Heart right ventricle (tissue), 16 donors: ENCODE measurements at regions of chr11 and their contacts with region 1.

Region 1: DNA sequence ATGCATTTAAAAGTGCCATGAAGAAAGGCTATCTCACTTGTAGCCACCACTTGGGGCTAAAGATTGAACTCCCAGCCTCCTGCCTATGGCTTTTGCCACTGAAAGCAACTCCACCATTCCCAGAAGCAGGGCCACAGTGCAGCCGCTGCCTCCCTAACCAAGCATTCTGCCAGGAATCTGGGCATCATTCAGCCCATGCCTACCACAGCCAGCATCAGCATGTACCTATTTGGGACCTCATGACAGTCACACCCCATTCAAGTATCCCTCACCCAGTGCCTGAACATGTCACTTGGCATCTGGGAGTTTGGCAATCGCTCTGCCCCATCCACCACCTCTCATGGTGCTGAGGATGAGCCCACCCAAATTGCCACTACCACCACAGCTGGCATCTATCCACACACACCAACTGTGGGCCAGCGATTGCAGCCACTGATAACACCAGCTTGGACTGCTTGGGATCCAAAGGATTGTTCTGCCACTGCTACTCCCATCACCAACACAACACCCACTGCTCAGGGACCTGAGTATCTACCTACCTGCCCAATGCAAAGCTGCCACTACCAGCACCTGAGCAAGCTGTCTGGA is 234.4 kb downstream of the GRM5 start:
- DNase-seq: no peak
- ATAC-seq: no peak
- H3K4me3 ChIP-seq: no peak overlapping the region
- H3K27ac ChIP-seq: no peak overlapping the region
- H3K4me1 ChIP-seq: no peaks in the 10 kb centered on the region
- H3K27me3 ChIP-seq: no peaks in the 10 kb centered on the region
- CTCF ChIP-seq: no peak

Region 2: GRCh38 chr11:88709567-88709966 is 121.8 kb before region 1 on chr11:
- intact Hi-C with region 1: no loop called
- DNase-seq: no peak
- ATAC-seq: no peak
- H3K4me3 ChIP-seq: no peak overlapping the region
- H3K27ac ChIP-seq: no peak overlapping the region
- H3K4me1 ChIP-seq: no peaks in the 10 kb centered on the region
- H3K27me3 ChIP-seq: no peaks in the 10 kb centered on the region
- CTCF ChIP-seq: no peak

Region 3: DNA sequence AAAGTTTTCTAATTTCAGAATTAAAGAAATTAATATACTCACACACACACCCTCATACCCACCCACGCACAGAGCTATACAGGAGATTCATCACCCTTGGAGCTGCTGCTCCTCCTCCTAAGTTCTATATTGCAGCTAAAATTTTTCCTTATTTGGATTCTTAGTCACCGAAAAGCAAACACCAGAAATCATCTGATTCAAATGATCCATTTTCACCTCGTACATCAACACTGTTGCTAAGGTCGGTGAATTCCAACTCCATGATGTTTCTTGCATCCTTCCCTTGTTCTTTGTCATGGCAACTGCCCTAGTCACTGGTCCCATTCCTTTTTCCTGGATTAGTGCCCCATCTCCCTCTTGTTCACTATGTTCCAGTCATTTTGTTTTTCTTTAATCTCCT is 51.8 kb before region 1 on chr11:
- intact Hi-C with region 1: loop called in 1 of 10 experiments (anchors 10 kb)
- DNase-seq: no peak
- ATAC-seq: no peak
- H3K4me3 ChIP-seq: no peak overlapping the region
- H3K27ac ChIP-seq: no peak overlapping the region
- H3K4me1 ChIP-seq: no peaks in the 10 kb centered on the region
- H3K27me3 ChIP-seq: no peaks in the 10 kb centered on the region
- CTCF ChIP-seq: no peak

Region 4: DNA sequence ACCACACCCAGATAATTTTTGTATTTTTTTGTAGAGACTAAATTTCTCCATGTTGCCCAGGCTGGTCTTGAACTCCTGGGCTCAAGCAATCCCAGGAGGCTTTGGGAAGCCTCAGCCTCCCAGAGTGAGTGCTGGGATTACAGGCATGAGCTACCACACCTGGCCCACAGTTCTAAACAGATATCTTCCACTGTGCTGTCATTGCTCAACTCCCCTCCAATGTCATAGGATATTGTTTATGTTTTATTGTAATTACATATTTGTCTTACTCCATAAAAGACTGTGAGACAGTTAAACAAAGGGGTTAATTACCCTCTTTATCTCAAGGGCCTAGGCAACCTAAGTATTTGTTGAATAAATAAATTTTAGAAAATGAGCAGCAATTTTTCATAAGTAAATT is 30.2 kb after region 1 on chr11:
- intact Hi-C with region 1: no loop called
- DNase-seq: no peak
- ATAC-seq: no peak
- H3K4me3 ChIP-seq: no peak overlapping the region
- H3K27ac ChIP-seq: no peak overlapping the region
- H3K4me1 ChIP-seq: no peaks in the 10 kb centered on the region
- H3K27me3 ChIP-seq: no peaks in the 10 kb centered on the region
- CTCF ChIP-seq: no peak